Adrenal gland (tissue), 19 donors: ENCODE measurements at regions of chr2 and their contacts with region 1.

Region 1: GRCh38 chr2:197498937-197499593 is 575 bp downstream of the HSPD1 start:
- DNase-seq: peak; percentile 70 to 92 (median 80)
- H3K4me3 ChIP-seq: peak overlapping the region; percentile 13 to 76 (median 71)
- H3K27ac ChIP-seq: peak overlapping the region; percentile 87 to 99 (median 96)
- H3K4me1 ChIP-seq: peaks cover 32 to 71% of the 10 kb centered on the region in 2 donors
- H3K27me3 ChIP-seq: no peaks in the 10 kb centered on the region
- CTCF ChIP-seq: no peak
- POLR2A ChIP-seq: peak; percentile 56 to 75

Region 2: DNA sequence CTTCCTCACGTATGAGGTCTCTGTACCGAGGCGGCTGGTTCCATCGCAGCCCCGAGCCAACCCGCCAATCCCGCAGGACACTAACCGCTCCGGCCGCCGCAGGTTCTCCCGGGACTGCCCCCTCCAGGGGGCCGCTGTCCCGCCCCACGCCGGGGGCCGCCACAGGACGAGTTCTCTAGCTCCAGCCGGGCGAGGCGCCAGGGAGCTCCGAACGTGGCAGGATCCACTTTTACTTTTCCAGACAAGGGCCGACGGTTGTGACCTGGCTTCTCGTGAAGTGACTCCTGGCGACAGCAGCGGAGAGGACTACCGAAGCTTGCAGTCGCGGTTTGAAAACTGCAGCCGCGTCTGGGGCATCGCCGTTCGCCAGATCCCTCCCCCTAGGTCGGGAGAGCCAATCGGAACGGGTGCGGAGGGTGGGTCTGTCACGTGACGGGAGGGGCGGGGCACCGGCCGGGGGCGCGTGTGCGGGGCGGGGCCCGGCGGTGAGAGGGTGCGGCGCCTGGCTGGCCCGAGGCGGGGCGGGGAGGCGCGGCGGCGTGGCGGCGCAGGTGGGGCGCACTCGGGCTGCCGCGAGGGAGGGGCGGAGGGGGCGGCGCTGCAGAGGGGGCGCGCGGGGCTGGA is 1327.7 kb before region 1 on chr2 and contains the start of gene STK17B:
- intact Hi-C with region 1: no loop called
- DNase-seq: peak; percentile 95 to 97 (median 96)
- H3K4me3 ChIP-seq: peak within 1 kb of the TSS; percentile 59 to 99 (median 88)
- H3K27ac ChIP-seq: peak within 1 kb of the TSS; percentile 65 to 91 (median 85)
- H3K4me1 ChIP-seq: peaks cover 17 to 32% of the 10 kb centered on the region in 2 donors
- H3K27me3 ChIP-seq: no peaks in the 10 kb centered on the region
- CTCF ChIP-seq: no peak
- POLR2A ChIP-seq: peak; percentile 79 to 94
- total RNA-seq, gene STK17B: 3.6 to 35.0 (median 16.2) TPM

Region 3: DNA sequence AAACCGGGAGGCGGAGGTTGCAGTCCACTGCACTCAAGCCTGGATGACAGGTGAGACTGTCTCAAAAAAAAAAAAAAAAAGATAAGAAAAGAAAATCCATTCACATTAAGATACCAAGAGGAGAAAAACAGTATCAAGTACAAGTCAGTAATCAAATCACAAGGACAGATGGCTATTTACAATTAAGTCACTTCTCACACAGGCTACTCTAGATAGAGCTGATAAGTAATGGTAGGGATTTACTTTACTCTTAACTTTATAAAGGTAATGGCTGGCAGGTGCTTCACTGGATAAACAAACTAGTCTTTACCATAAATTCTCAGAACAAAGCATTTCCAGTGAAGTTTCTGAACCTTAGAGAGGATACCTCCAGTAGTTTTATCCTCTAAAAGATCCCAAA is 75.8 kb before region 1 on chr2:
- intact Hi-C with region 1: loop called in 1 of 2 experiments (anchors 5 kb)
- DNase-seq: no peak
- H3K4me3 ChIP-seq: no peak overlapping the region
- H3K27ac ChIP-seq: no peak overlapping the region
- H3K4me1 ChIP-seq: peaks cover 31 to 56% of the 10 kb centered on the region in 2 donors
- H3K27me3 ChIP-seq: no peaks in the 10 kb centered on the region
- CTCF ChIP-seq: no peak
- POLR2A ChIP-seq: no peak

Region 4: DNA sequence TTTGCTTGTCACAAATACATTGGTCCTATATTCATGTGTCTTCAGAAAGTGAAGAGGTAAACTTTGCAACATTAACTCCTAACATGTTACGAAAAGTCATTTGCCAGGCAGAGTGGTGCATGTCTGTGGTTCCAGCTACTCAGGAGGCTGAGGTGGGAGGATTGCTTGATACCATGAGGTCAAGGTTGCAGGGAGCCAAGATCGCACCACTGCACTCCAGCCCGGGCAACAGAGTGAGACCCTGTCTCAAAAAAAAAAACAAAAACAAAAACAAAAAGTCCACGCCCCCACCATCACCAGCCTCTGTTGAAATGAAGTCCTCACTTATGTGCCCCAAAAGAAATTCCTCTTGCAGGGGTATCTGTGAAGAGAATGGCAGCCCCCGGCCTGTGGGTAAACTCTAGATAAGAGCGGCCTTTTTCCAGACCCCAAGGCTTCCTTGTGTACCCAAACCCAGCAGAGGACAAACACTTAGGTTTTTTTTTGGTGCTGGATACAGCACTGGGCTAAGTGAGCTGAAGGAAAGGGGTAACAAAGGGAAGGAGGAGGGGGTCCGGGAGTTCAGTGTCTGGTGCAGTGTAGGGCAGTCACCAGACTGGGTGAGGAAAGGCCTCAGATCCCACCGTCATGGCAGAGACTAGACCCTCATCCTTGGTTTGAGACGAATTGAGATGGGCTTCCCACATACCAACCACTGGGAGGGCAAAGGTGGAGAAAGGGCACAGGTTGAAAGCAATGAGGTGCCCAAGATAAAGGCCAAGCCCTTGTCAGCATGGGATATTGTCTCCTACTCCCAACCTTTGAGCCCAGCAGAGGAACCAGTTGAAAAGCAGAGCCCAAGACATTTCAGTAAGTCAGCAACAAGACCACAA is 18.7 kb before region 1 on chr2:
- intact Hi-C with region 1: no loop called
- DNase-seq: no peak
- H3K4me3 ChIP-seq: no peak overlapping the region
- H3K27ac ChIP-seq: no peak overlapping the region
- H3K4me1 ChIP-seq: no peaks in the 10 kb centered on the region
- H3K27me3 ChIP-seq: no peaks in the 10 kb centered on the region
- CTCF ChIP-seq: no peak
- POLR2A ChIP-seq: no peak